CD4-positive, alpha-beta memory T cell (primary cell): ENCODE measurements at regions of chr2 and their contacts with region 1.

Region 1: GRCh38 chr2:181178823-181179412 is 198.5 kb downstream of the UBE2E3 start:
- DNase-seq: peak in 4 of 5 donors; percentile 29 to 43 (median 37)
- H3K4me3 ChIP-seq: no peak overlapping the region
- H3K4me3 Mint-ChIP-seq: peak overlapping the region in 4 of 8 donors; percentile 19 to 41 (median 34)
- H3K27ac ChIP-seq: peak overlapping the region; percentile 1
- H3K27ac Mint-ChIP-seq: peak overlapping the region; percentile 12 to 90 (median 54)
- H3K4me1 ChIP-seq: peaks cover 52% of the 10 kb centered on the region
- H3K4me1 Mint-ChIP-seq: peaks cover 31 to 39% (median 36%) of the 10 kb centered on the region in 4 donors
- H3K27me3 ChIP-seq: no peaks in the 10 kb centered on the region
- H3K27me3 Mint-ChIP-seq: no peaks in the 10 kb centered on the region

Region 2: GRCh38 chr2:181275643-181276070 is 96.7 kb after region 1 on chr2:
- CTCF ChIA-PET with region 1: interaction called, 3 read pairs
- POLR2A ChIA-PET with region 1: interaction called, 3 read pairs
- intact Hi-C with region 1: loop called (anchors 5 kb)
- DNase-seq: peak; percentile 17 to 45 (median 43)
- H3K4me3 ChIP-seq: no peak overlapping the region
- H3K4me3 Mint-ChIP-seq: peak overlapping the region in 6 of 8 donors; percentile 12 to 69 (median 40)
- H3K27ac ChIP-seq: peak overlapping the region; percentile 31
- H3K27ac Mint-ChIP-seq: peak overlapping the region; percentile 57 to 92 (median 78)
- H3K4me1 ChIP-seq: peaks cover 40% of the 10 kb centered on the region
- H3K4me1 Mint-ChIP-seq: peaks cover 26 to 54% (median 37%) of the 10 kb centered on the region in 4 donors
- H3K27me3 ChIP-seq: no peaks in the 10 kb centered on the region
- H3K27me3 Mint-ChIP-seq: no peaks in the 10 kb centered on the region

Region 3: GRCh38 chr2:182798736-182799135 is 1619.8 kb after region 1 on chr2:
- CTCF ChIA-PET with region 1: no interaction called
- POLR2A ChIA-PET with region 1: no interaction called
- intact Hi-C with region 1: no loop called
- DNase-seq: no peak
- H3K4me3 ChIP-seq: no peak overlapping the region
- H3K4me3 Mint-ChIP-seq: no peak overlapping the region
- H3K27ac ChIP-seq: no peak overlapping the region
- H3K27ac Mint-ChIP-seq: no peak overlapping the region
- H3K4me1 ChIP-seq: no peaks in the 10 kb centered on the region
- H3K4me1 Mint-ChIP-seq: no peaks in the 10 kb centered on the region
- H3K27me3 ChIP-seq: no peaks in the 10 kb centered on the region
- H3K27me3 Mint-ChIP-seq: peaks cover 15 to 20% of the 10 kb centered on the region in 2 donors